ENCODE measurements at regions of chr22 and their contacts with region 1.

Region 1: GRCh38 chr22:39502109-39502788 is at the start of gene MIEF1:
- DNase-seq: peak; percentile 76 to 93 (median 80)
- ATAC-seq: peak; percentile 95 to 96
- H3K4me3 Mint-ChIP-seq: peak within 1 kb of the TSS; percentile 83 to 99 (median 97)
- H3K27ac Mint-ChIP-seq: peak within 1 kb of the TSS; percentile 87 to 98 (median 95)
- H3K4me1 Mint-ChIP-seq: peaks cover 24 to 50% (median 46%) of the 10 kb centered on the region in 4 donors
- H3K27me3 Mint-ChIP-seq: no peaks in the 10 kb centered on the region
- polyA plus RNA-seq, gene MIEF1: 22.2 to 35.8 (median 25.9) TPM

Region 2: DNA sequence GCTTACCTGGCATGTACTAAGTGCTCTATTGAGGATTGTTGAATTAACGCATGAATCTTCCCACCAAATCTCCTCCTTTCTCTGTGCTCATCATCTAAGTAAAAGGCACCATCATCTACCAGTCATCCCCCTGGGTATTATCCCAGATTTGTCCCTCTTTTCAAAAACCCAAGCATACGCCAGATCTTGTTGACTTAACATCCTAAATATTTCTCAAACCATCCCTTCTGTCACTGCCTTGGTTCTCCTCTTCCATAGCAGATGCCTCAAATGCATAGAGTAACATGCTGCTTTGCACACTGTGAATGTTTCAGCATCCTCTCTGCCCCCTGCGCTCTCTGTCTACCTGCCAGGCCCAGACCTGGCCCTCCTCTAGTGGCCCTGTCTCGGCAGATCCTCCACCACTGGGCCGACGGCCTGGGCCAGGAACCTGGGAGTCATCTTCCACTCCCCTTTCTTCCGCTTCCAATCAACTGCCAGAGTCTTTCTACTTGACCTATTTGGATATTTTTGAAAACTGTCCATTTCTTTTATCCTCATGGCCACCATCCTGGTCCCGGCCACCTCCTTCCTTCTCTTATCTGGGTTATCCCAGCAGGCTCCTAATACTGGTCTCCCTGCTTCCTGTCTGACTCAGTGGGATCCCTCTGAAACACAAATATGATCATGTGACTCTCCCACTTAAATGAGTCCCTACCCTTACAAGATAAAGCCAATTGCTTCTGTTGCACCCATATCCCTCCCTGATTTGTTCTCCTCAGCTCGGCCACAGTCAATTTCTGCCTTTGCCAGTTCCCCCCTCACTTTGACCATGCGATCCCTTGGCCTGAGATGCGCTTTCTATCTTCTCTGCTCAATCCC is 106.1 kb before region 1 on chr22:
- POLR2A ChIA-PET with region 1: interaction called, 15 read pairs
- DNase-seq: no peak
- ATAC-seq: no peak
- H3K4me3 Mint-ChIP-seq: peak overlapping the region in 2 of 10 donors; percentile 20 to 21
- H3K27ac Mint-ChIP-seq: peak overlapping the region in 3 of 10 donors; percentile 17 to 48 (median 35)
- H3K4me1 Mint-ChIP-seq: peaks cover under 1 to 11% (median 7%) of the 10 kb centered on the region in 4 donors
- H3K27me3 Mint-ChIP-seq: no peaks in the 10 kb centered on the region

Region 3: GRCh38 chr22:39471381-39472141 is 30.7 kb before region 1 on chr22:
- POLR2A ChIA-PET with region 1: no interaction called
- DNase-seq: peak in 3 of 10 donors; percentile 12 to 29 (median 20)
- ATAC-seq: peak; percentile 76 to 85
- H3K4me3 Mint-ChIP-seq: peak overlapping the region; percentile 8 to 83 (median 59)
- H3K27ac Mint-ChIP-seq: peak overlapping the region in 9 of 10 donors; percentile 17 to 88 (median 73)
- H3K4me1 Mint-ChIP-seq: peaks cover 21 to 40% (median 34%) of the 10 kb centered on the region in 4 donors
- H3K27me3 Mint-ChIP-seq: no peaks in the 10 kb centered on the region

Region 4: GRCh38 chr22:39514373-39514973 is 12.2 kb after region 1 on chr22:
- POLR2A ChIA-PET with region 1: interaction called, 72 read pairs
- DNase-seq: peak in 6 of 10 donors; percentile 42 to 53 (median 50)
- ATAC-seq: peak in 1 of 2 donors; percentile 37
- H3K4me3 Mint-ChIP-seq: no peak overlapping the region
- H3K27ac Mint-ChIP-seq: peak overlapping the region in 5 of 10 donors; percentile 25 to 69 (median 47)
- H3K4me1 Mint-ChIP-seq: peaks cover 9 to 25% (median 17%) of the 10 kb centered on the region in 4 donors
- H3K27me3 Mint-ChIP-seq: no peaks in the 10 kb centered on the region